Caco-2 (cell line): ENCODE measurements at regions of chr1 and their contacts with region 1.

Region 1: GRCh38 chr1:157045251-157046218 is at the start of gene ARHGEF11:
- DNase-seq: peak; percentile 92 to 96
- H3K4me3 ChIP-seq: peak within 1 kb of the TSS; percentile 59
- H3K4me3 Mint-ChIP-seq: peak within 1 kb of the TSS; percentile 100
- H3K27ac Mint-ChIP-seq: peak within 1 kb of the TSS; percentile 97
- H3K4me1 ChIP-seq: peaks cover 10% of the 10 kb centered on the region
- H3K4me1 Mint-ChIP-seq: peaks cover 37% of the 10 kb centered on the region
- H3K27me3 ChIP-seq: no peaks in the 10 kb centered on the region
- H3K27me3 Mint-ChIP-seq: no peaks in the 10 kb centered on the region
- CTCF ChIP-seq: no peak
- total RNA-seq, gene ARHGEF11: 45.5 and 47.3 TPM in 2 replicates

Region 2: DNA sequence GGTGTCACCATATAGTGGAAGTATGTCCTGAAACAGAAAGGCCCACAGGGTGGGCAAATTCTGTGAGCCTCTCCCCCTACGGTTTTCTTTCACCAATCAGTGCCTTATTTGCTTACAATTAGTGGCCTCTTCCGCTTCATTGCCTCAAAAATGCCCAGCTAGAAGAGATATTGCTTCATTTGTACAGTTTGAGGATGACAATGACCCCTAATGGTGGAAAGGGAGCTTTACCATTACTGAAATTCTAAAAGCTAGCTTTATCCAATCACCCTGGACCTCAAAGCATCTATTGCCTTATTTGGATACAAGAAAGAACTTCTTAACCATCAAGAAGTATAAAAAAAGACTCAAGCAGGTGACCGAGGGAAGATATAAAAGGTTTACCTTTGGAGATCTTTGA is 75.5 kb before region 1 on chr1:
- CTCF ChIA-PET with region 1: interaction called, 3 read pairs
- POLR2A ChIA-PET with region 1: no interaction called
- intact Hi-C with region 1: loop called (anchors 2 kb)
- DNase-seq: no peak
- H3K4me3 ChIP-seq: no peak overlapping the region
- H3K4me3 Mint-ChIP-seq: no peak overlapping the region
- H3K27ac Mint-ChIP-seq: no peak overlapping the region
- H3K4me1 ChIP-seq: peaks cover 35% of the 10 kb centered on the region
- H3K4me1 Mint-ChIP-seq: peaks cover 19% of the 10 kb centered on the region
- H3K27me3 ChIP-seq: no peaks in the 10 kb centered on the region
- H3K27me3 Mint-ChIP-seq: no peaks in the 10 kb centered on the region
- CTCF ChIP-seq: peak; percentile 12 to 22

Region 3: DNA sequence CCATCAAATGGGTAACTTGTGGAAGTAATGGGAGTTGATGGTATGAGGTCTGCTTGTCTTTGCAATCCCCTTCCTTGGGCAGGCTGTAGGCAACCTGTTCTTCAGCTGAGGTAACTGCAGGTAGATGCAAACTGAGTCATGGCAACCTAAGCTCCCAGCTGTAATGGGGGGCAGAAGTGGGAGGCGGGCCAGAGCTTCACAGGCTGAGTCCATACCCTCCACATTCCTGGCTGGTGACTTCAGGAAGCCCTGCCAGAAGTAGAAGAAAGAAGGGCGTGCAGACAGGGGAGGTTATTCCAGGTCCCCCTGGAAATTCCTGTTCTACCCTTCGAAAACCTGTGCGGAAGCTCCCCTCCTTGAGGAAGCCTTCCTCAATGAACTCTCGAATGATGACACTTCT is 44.8 kb before region 1 on chr1:
- CTCF ChIA-PET with region 1: no interaction called
- POLR2A ChIA-PET with region 1: interaction called, 3 read pairs
- intact Hi-C with region 1: loop called (anchors 1 kb)
- DNase-seq: no peak
- H3K4me3 ChIP-seq: no peak overlapping the region
- H3K4me3 Mint-ChIP-seq: no peak overlapping the region
- H3K27ac Mint-ChIP-seq: no peak overlapping the region
- H3K4me1 ChIP-seq: peaks cover 16% of the 10 kb centered on the region
- H3K4me1 Mint-ChIP-seq: peaks cover 25% of the 10 kb centered on the region
- H3K27me3 ChIP-seq: no peaks in the 10 kb centered on the region
- H3K27me3 Mint-ChIP-seq: no peaks in the 10 kb centered on the region
- CTCF ChIP-seq: no peak

Region 4: DNA sequence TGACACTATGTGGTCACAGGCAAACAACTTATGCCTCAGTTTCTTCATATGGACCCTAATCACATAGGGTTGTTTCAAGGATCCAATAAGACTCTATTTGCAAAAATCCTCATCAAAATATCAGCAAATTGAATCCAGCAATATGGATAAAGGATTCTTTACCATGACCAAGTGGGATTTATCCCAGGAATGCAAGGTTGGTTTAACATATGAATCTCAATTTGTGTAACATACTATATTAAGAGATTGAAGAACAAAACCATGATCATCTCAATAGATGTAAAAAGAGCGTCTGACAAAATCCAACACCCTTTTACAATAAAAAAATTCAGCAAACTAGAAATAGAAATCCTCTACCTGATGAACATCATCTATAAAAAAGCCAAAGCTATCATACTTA is 23.8 kb before region 1 on chr1:
- CTCF ChIA-PET with region 1: no interaction called
- POLR2A ChIA-PET with region 1: no interaction called
- intact Hi-C with region 1: loop called (anchors 2 kb)
- DNase-seq: no peak
- H3K4me3 ChIP-seq: no peak overlapping the region
- H3K4me3 Mint-ChIP-seq: no peak overlapping the region
- H3K27ac Mint-ChIP-seq: no peak overlapping the region
- H3K4me1 ChIP-seq: no peaks in the 10 kb centered on the region
- H3K4me1 Mint-ChIP-seq: no peaks in the 10 kb centered on the region
- H3K27me3 ChIP-seq: no peaks in the 10 kb centered on the region
- H3K27me3 Mint-ChIP-seq: no peaks in the 10 kb centered on the region
- CTCF ChIP-seq: no peak

Region 5: DNA sequence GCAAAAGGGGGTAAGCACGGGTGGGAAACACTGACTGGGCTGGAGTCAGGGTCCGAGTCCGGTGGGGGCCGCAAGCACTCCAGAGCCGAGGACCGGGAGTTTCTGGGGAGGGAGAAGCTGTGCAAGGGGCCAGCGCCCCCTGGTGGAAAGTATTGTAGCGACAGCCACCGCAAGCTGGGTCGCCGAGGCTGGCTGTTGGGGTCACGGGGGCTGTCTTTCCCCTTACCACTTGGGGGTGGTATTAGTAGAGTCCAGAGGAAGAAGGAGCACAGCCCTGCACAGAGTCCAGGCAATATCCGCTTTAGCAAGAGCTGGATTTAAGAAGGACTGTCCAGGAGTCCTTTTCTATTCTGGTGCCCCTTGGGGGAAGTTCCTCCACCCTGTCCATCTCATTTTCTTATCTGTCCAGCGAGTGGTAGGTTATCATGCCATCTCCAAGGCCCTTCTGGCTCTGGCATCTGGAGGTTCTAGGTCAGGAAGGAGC is 110.6 kb after region 1 on chr1:
- CTCF ChIA-PET with region 1: no interaction called
- POLR2A ChIA-PET with region 1: no interaction called
- intact Hi-C with region 1: loop called (anchors 5 kb)
- DNase-seq: peak; percentile 79 to 89
- H3K4me3 ChIP-seq: peak overlapping the region; percentile 24
- H3K4me3 Mint-ChIP-seq: peak overlapping the region; percentile 77
- H3K27ac Mint-ChIP-seq: peak overlapping the region; percentile 91
- H3K4me1 ChIP-seq: peaks cover 26% of the 10 kb centered on the region
- H3K4me1 Mint-ChIP-seq: peaks cover 27% of the 10 kb centered on the region
- H3K27me3 ChIP-seq: no peaks in the 10 kb centered on the region
- H3K27me3 Mint-ChIP-seq: no peaks in the 10 kb centered on the region
- CTCF ChIP-seq: peak; percentile 92 to 97

Region 6: DNA sequence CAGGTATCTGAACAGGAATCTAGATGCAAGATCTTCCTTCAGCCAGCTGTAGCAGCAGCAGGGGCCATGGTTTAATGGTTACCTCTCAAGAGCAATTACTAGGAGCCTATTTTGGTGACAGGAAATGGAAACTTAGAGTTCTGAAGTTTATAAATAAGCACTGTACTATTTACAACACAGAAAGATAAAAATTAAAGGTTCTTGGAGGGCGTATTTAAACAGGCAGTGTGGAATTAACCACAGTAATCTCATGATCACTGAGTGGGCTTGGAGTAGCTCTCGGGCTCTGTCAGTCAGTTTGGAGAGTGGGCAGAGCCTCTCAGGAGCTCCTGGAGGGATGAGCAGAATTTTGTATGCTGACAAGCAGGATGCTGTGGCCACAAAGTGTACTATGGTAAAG is 517.0 kb after region 1 on chr1:
- CTCF ChIA-PET with region 1: no interaction called
- POLR2A ChIA-PET with region 1: no interaction called
- intact Hi-C with region 1: no loop called
- DNase-seq: no peak
- H3K4me3 ChIP-seq: no peak overlapping the region
- H3K4me3 Mint-ChIP-seq: no peak overlapping the region
- H3K27ac Mint-ChIP-seq: no peak overlapping the region
- H3K4me1 ChIP-seq: no peaks in the 10 kb centered on the region
- H3K4me1 Mint-ChIP-seq: no peaks in the 10 kb centered on the region
- H3K27me3 ChIP-seq: no peaks in the 10 kb centered on the region
- H3K27me3 Mint-ChIP-seq: peaks cover 15% of the 10 kb centered on the region
- CTCF ChIP-seq: no peak